Gastrocnemius medialis (tissue), 4 donors: ENCODE measurements at regions of chr7 and their contacts with region 1.

Region 1: DNA sequence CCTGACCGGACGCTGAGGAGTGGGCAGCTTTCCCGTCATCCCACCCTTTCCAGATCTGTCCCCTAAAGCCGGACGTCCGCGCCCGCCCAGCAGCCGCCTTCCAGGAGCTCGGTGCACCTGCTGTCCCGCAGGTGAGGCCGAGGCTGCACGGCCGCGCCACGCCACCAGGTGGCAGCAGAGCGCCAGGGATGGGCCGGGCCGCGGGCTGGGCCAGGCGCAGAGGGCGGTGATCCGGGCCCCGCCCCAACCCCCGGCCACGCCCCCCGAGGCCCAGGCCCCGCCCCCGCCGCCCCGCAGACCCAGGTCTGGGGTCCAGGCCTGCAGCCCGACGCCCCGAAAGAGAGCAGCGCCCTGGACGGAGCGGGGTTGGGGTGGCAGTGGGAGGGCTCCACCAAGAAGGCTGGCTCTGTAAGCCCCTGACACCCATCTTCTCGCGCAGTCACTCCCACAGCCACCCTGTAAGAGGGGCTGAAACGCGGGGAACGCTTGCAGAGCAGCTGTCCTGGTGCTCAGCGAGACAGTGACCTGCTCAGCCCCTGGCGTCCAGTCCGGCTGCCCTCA is 32.2 kb downstream of the FOXL3 start:
- DNase-seq: peak in 1 of 2 donors; percentile 48
- ATAC-seq: peak; percentile 49 to 78
- H3K4me3 ChIP-seq: no peak overlapping the region
- H3K27ac ChIP-seq: no peak overlapping the region
- H3K4me1 ChIP-seq: peaks cover 4 to 12% of the 10 kb centered on the region in 2 donors
- H3K27me3 ChIP-seq: peaks cover 0 to 2% (median 0%) of the 10 kb centered on the region in 3 donors
- CTCF ChIP-seq: peak; percentile 79 to 98 (median 92)
- POLR2A ChIP-seq: no peak

Region 2: GRCh38 chr7:150811-151221 is 171.4 kb before region 1 on chr7:
- in situ Hi-C with region 1: no loop called
- intact Hi-C with region 1: no loop called
- DNase-seq: no peak
- ATAC-seq: no peak
- H3K4me3 ChIP-seq: no peak overlapping the region
- H3K27ac ChIP-seq: peak overlapping the region in 2 of 4 donors; percentile 92 to 98
- H3K4me1 ChIP-seq: peaks cover 5 to 15% of the 10 kb centered on the region in 2 donors
- H3K27me3 ChIP-seq: no peaks in the 10 kb centered on the region
- CTCF ChIP-seq: no peak
- POLR2A ChIP-seq: no peak

Region 3: GRCh38 chr7:341841-342638 is 19.8 kb after region 1 on chr7:
- in situ Hi-C with region 1: no loop called
- intact Hi-C with region 1: no loop called
- DNase-seq: peak; percentile 52 to 65
- ATAC-seq: peak; percentile 84 to 90
- H3K4me3 ChIP-seq: no peak overlapping the region
- H3K27ac ChIP-seq: peak overlapping the region in 3 of 4 donors; percentile 61 to 81 (median 65)
- H3K4me1 ChIP-seq: peaks cover 7 to 8% of the 10 kb centered on the region in 2 donors
- H3K27me3 ChIP-seq: no peaks in the 10 kb centered on the region
- CTCF ChIP-seq: no peak
- POLR2A ChIP-seq: no peak

Region 4: GRCh38 chr7:391411-391951 is 69.3 kb after region 1 on chr7:
- in situ Hi-C with region 1: no loop called
- intact Hi-C with region 1: no loop called
- DNase-seq: peak in 1 of 2 donors; percentile 5
- ATAC-seq: no peak
- H3K4me3 ChIP-seq: no peak overlapping the region
- H3K27ac ChIP-seq: no peak overlapping the region
- H3K4me1 ChIP-seq: no peaks in the 10 kb centered on the region
- H3K27me3 ChIP-seq: peaks cover 0 to 6% (median 0%) of the 10 kb centered on the region in 3 donors
- CTCF ChIP-seq: no peak
- POLR2A ChIP-seq: no peak

Region 5: GRCh38 chr7:636396-636795 is 314.2 kb after region 1 on chr7:
- in situ Hi-C with region 1: no loop called
- intact Hi-C with region 1: loop called (anchors 2 kb)
- DNase-seq: no peak
- ATAC-seq: peak in 1 of 2 donors; percentile 36
- H3K4me3 ChIP-seq: no peak overlapping the region
- H3K27ac ChIP-seq: no peak overlapping the region
- H3K4me1 ChIP-seq: no peaks in the 10 kb centered on the region
- H3K27me3 ChIP-seq: no peaks in the 10 kb centered on the region
- CTCF ChIP-seq: peak in 4 of 5 experiments; percentile 7 to 50 (median 48)
- POLR2A ChIP-seq: no peak

Region 6: DNA sequence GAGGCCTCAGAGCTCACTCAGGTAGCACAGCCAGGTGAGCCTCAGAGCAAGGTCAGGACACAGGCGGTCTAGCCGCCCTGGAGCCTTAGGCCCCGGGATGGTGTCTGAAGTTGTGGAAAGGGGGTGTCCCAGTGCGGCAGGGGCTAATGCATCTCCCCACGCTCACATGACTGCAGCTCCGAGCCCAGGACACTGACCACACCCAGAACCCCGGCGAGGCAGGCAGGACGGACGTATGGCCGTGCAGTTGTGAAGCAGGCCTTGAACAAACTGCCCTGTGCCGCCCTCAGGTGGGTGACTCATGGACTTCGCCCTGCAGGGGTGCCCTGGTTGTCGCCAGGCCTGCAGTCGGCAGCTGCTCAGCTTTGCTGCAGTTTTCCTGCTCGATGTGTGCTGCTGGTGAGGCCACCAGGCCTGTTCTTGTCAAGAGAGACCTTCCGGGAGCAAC is 409.9 kb after region 1 on chr7:
- in situ Hi-C with region 1: loop called in 1 of 4 experiments (anchors 10 kb)
- intact Hi-C with region 1: no loop called
- DNase-seq: peak; percentile 56 to 72
- ATAC-seq: peak; percentile 77 to 80
- H3K4me3 ChIP-seq: no peak overlapping the region
- H3K27ac ChIP-seq: peak overlapping the region; percentile 80 to 88 (median 82)
- H3K4me1 ChIP-seq: peaks cover 29 to 39% of the 10 kb centered on the region in 2 donors
- H3K27me3 ChIP-seq: no peaks in the 10 kb centered on the region
- CTCF ChIP-seq: peak in 3 of 5 experiments; percentile 47 to 49 (median 47)
- POLR2A ChIP-seq: no peak

Region 7: DNA sequence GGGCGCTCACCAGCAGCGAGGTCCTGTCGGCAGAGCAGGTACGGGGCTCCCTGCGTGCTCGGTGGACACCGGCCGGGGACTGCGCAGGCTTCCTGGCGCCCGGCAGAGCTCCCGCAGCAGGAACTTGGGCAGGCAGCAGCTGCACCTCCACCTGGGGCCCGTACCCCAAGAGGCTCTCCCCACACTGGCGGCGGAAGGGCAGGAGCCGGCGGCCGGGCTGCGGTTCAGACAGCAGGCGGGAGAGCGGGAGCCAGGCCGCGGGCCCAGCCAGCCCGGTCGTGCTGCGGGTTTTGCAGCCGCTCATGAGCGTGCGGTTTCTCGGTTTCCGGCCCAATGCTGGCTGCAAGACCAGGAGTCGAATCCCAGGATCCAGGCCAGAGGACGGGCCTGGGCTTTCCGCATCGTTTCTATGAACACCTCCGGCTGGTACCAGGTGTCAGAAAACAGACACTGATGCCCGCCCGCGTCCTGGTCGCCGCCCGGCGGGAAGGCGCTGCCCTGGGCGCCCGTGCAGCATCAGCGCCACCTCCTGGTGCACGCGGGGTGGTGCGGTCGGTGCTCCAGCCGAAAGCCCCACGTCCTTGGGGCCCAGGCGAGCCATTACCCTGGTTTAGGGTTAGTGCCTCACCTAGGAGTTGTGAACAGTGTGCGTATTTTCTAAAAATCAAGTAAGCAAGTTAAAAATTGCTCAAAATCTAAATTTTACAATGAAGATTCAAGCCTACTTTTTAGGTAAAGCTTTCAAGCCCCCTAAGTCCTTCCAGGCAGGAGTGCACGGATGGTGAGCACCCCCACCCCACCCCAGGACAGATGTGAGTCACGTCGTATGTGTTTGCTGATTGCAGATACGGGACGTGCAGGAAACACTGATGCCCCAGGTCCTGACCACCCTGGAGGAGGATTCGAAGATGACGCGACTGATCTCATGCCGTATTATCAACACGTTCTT is 452.2 kb after region 1 on chr7:
- in situ Hi-C with region 1: loop called in 3 of 4 experiments (anchors 5 to 10 kb)
- intact Hi-C with region 1: loop called (anchors 1 kb)
- DNase-seq: peak in 1 of 2 donors; percentile 40
- ATAC-seq: peak; percentile 52 to 53
- H3K4me3 ChIP-seq: no peak overlapping the region
- H3K27ac ChIP-seq: no peak overlapping the region
- H3K4me1 ChIP-seq: peaks cover 6 to 7% of the 10 kb centered on the region in 2 donors
- H3K27me3 ChIP-seq: no peaks in the 10 kb centered on the region
- CTCF ChIP-seq: peak; percentile 88 to 94 (median 91)
- POLR2A ChIP-seq: no peak